ENCODE measurements at regions of chr18 and their contacts with region 1.

Region 1: DNA sequence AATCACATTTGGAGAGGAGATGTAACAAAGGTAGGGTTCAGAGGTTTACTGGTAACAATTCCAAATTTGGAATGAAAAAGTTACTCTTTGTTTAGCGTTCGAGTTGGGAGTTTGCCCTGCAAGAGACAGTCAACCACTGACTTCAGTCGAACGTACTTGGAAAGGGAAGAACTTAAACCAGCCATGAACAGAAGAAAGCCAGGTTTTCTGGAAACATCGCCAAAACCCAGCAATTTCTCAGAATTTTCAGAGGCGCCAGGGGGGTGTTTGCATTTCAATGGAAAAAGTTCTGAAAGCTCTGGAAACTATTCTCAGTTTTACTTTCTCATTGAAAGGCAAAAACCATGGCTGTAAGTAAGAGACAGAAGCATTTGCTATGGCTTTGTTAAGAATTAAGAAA is 28.5 kb upstream of the AQP4 start:
- DNase-seq: no peak
- ATAC-seq: no peak
- H3K4me3 ChIP-seq: peak overlapping the region in 1 of 12 donors; percentile 3
- H3K27ac ChIP-seq: no peak overlapping the region
- H3K4me1 ChIP-seq: no peaks in the 10 kb centered on the region
- H3K27me3 ChIP-seq: no peaks in the 10 kb centered on the region
- CTCF ChIP-seq: no peak
- POLR2A ChIP-seq: no peak

Region 2: DNA sequence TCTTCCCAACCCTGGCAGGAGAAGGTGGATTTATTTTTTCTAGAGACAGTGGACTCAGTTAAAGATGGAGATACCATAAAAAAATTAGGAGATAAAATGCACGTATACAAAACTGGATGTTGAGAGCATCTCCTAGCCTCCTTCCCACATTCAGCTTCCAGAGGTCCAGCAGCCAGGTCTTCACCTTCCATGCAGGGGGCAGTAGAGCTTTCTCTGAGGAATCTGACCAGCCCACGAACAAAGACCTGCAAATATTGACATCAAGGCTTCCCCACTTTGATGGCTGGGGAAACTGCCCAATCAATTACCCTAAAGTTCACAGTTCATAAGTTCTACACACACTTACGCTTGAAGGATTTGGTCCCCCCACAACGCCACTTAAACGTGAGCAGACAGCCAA is 53.0 kb before region 1 on chr18:
- intact Hi-C with region 1: loop called in 1 of 10 experiments (anchors 10 kb)
- DNase-seq: no peak
- ATAC-seq: no peak
- H3K4me3 ChIP-seq: no peak overlapping the region
- H3K27ac ChIP-seq: no peak overlapping the region
- H3K4me1 ChIP-seq: peaks cover 0 to under 1% (median 0%) of the 10 kb centered on the region in 12 donors
- H3K27me3 ChIP-seq: no peaks in the 10 kb centered on the region
- CTCF ChIP-seq: no peak
- POLR2A ChIP-seq: no peak

Region 3: DNA sequence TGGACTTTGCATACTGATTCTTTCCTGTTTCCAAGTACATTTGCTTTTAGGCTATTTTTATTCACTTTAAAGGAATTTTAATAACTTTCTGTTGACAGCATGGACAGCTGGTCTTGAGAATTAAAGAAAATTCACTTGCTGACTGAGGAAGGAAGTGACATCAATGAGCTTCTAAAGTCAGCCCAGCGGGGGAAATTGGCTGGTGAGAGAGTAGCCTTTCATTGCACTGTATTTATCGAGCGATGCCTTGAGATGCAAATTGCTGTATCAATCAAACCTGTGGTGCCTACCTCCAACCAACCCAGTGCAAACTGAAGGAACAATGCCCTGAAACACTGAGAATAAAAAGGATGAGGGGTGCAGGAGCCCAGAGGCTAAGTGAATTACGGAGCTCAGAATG is 62.9 kb after region 1 on chr18:
- intact Hi-C with region 1: loop called in 1 of 10 experiments (anchors 10 kb)
- DNase-seq: no peak
- ATAC-seq: peak in 1 of 4 donors; percentile 56
- H3K4me3 ChIP-seq: no peak overlapping the region
- H3K27ac ChIP-seq: no peak overlapping the region
- H3K4me1 ChIP-seq: peaks cover 0 to 11% (median 0%) of the 10 kb centered on the region in 12 donors
- H3K27me3 ChIP-seq: no peaks in the 10 kb centered on the region
- CTCF ChIP-seq: no peak
- POLR2A ChIP-seq: no peak

Region 4: DNA sequence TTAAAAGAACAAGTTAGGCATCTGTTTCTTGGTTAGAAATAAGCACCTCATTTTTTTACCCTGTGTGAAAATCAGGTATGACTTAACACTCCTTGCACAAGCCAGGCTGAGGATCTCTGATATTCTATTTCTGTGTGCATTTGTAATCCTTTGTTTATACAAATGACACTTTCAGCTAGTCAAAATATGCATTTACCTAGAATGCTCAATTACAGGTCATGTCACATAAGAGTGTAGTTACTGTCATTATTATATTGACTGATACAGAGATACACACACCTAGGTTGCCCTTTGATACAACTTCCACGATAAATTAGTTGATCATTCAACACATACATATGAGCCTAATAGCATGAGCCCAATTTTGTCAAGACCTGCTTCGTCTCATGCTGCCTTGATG is 146.8 kb after region 1 on chr18:
- intact Hi-C with region 1: no loop called
- DNase-seq: no peak
- ATAC-seq: no peak
- H3K4me3 ChIP-seq: no peak overlapping the region
- H3K27ac ChIP-seq: no peak overlapping the region
- H3K4me1 ChIP-seq: no peaks in the 10 kb centered on the region
- H3K27me3 ChIP-seq: no peaks in the 10 kb centered on the region
- CTCF ChIP-seq: no peak
- POLR2A ChIP-seq: no peak